Left colon (tissue), 2 donors: ENCODE measurements at regions of chr18 and their contacts with region 1.

Region 1: GRCh38 chr18:1229634-1230033 is 325.0 kb downstream of the ADCYAP1 start:
- DNase-seq: no peak
- ATAC-seq: no peak

Region 2: DNA sequence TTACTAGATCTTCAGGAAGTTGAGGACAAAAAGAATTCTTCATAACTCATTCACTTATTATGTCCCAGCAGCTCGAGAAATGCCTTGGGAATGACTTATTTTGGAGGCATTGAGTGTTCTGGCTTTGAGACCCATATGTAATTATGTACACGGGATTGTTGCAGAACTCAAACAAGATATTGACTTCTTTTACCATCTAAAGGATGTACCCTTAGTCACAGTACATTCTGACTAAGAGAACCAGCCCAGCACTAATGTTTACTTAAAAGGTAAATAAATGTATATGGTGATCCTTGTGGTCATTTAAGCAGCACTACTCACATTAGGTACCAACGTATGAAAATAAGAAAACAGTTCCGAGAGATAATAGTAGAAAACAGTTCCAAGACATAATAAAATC is 56.0 kb before region 1 on chr18:
- intact Hi-C with region 1: loop called in 1 of 2 experiments (anchors 10 kb)
- DNase-seq: no peak
- ATAC-seq: no peak

Region 3: GRCh38 chr18:1452821-1453220 is 223.2 kb after region 1 on chr18:
- intact Hi-C with region 1: no loop called
- DNase-seq: no peak
- ATAC-seq: no peak